ENCODE measurements at regions of chr11 and their contacts with region 1.

Region 1: GRCh38 chr11:47443042-47443700 is 5.8 kb downstream of the RAPSN start:
- DNase-seq: no peak
- ATAC-seq: peak in 1 of 2 donors; percentile 33
- H3K4me3 ChIP-seq: no peak overlapping the region
- H3K27ac ChIP-seq: peak overlapping the region; percentile 39 to 58 (median 46)
- H3K4me1 ChIP-seq: peaks cover 17 to 20% of the 10 kb centered on the region in 2 donors
- H3K27me3 ChIP-seq: no peaks in the 10 kb centered on the region
- CTCF ChIP-seq: peak in 1 of 5 experiments; percentile 18
- POLR2A ChIP-seq: no peak

Region 2: GRCh38 chr11:47387911-47388678 is 55.1 kb before region 1 on chr11:
- in situ Hi-C with region 1: loop called in 1 of 4 experiments (anchors 10 kb)
- intact Hi-C with region 1: no loop called
- DNase-seq: no peak
- ATAC-seq: no peak
- H3K4me3 ChIP-seq: no peak overlapping the region
- H3K27ac ChIP-seq: no peak overlapping the region
- H3K4me1 ChIP-seq: peaks cover under 1 to 6% of the 10 kb centered on the region in 2 donors
- H3K27me3 ChIP-seq: no peaks in the 10 kb centered on the region
- CTCF ChIP-seq: no peak
- POLR2A ChIP-seq: no peak